HepG2 (cell line): ENCODE measurements at regions of chr15 and their contacts with region 1.

Region 1: GRCh38 chr15:66603301-66604179 is 37.7 kb upstream of the LCTL start:
- DNase-seq: peak; percentile 40
- ATAC-seq: peak; percentile 92
- H3K4me3 ChIP-seq: no peak overlapping the region
- H3K27ac ChIP-seq: no peak overlapping the region
- H3K4me1 ChIP-seq: no peaks in the 10 kb centered on the region
- H3K27me3 ChIP-seq: no peaks in the 10 kb centered on the region; a peak in 1 of 5 replicates
- CTCF ChIP-seq: peak; percentile 88
- EP300 ChIP-seq: no peak
- POLR2A ChIP-seq: no peak
- RAD21 ChIP-seq: peak; percentile 89

Region 2: DNA sequence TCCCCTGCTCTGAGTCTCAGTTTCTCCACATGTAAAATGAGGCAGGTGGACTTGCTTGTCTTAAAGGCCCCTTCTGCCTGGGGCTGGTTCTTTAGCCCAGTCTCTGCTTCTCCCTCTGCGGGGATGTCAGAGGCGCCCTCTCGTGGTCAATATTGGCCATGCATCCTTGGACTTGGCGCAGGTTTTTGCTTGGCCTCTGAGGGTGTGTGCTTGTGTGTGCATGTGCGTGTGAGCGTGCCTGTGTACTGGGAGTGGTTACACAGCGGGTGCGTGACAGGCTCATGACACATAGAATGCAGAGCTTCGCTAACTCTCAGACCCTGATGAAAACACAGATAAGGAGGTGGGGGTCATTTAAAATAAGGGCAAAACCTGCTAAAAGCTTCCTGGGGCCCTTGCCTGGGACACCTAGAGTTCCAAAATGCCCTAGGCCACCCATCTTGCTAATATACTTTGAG is 259.4 kb after region 1 on chr15:
- CTCF ChIA-PET with region 1: interaction called, 16 read pairs
- POLR2A ChIA-PET with region 1: no interaction called
- in situ Hi-C with region 1: no loop called
- intact Hi-C with region 1: no loop called
- DNase-seq: peak; percentile 60
- ATAC-seq: peak; percentile 95
- H3K4me3 ChIP-seq: no peak overlapping the region
- H3K27ac ChIP-seq: no peak overlapping the region
- H3K4me1 ChIP-seq: no peaks in the 10 kb centered on the region
- H3K27me3 ChIP-seq: peaks cover 2 to 9% of the 10 kb centered on the region in 2 experiments; a peak in 3 of 5 replicates
- CTCF ChIP-seq: peak; percentile 90
- EP300 ChIP-seq: no peak
- POLR2A ChIP-seq: no peak
- RAD21 ChIP-seq: no peak